ENCODE measurements at regions of chr19 and their contacts with region 1.

Region 1: GRCh38 chr19:2578901-2579677 is 103.2 kb downstream of the GADD45B start:
- DNase-seq: peak; percentile 65
- H3K4me3 ChIP-seq: peak overlapping the region; percentile 64
- CTCF ChIP-seq: peak; percentile 98

Region 2: DNA sequence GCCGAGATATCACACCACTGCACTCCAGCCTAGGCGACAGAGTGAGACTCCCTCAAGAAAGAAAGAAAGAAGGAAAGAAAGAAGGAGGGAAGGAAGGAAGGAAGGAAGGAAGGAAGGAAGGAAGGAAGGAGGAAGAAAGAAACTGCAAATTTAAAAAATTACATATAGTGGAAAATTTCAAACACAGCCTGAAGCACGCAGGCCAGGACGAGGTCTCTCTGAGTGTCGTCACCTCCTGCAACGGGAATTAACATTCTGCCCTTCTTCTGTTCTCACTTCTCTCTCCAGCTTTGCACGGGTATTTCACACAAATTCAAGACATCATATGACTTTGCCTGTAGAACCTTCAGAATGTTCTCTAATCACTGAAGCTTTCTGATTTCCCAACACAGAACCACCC is 15.2 kb after region 1 on chr19:
- CTCF ChIA-PET with region 1: interaction called, 27 read pairs
- POLR2A ChIA-PET with region 1: no interaction called
- DNase-seq: no peak
- H3K4me3 ChIP-seq: no peak overlapping the region
- CTCF ChIP-seq: no peak

Region 3: GRCh38 chr19:2602391-2603181 is 23.5 kb after region 1 on chr19:
- CTCF ChIA-PET with region 1: interaction called, 26 read pairs
- POLR2A ChIA-PET with region 1: interaction called, 4 read pairs
- DNase-seq: peak; percentile 93
- H3K4me3 ChIP-seq: peak overlapping the region; percentile 24
- CTCF ChIP-seq: peak; percentile 26